Activated CD8-positive, alpha-beta memory T cell treated with anti-CD3 and anti-CD28 coated beads, Interleukin-2, amount 10 ng/mL, durations not matched to agents 7 days and 5 days (primary cell): ENCODE measurements at regions of chr12 and their contacts with region 1.

Region 1: DNA sequence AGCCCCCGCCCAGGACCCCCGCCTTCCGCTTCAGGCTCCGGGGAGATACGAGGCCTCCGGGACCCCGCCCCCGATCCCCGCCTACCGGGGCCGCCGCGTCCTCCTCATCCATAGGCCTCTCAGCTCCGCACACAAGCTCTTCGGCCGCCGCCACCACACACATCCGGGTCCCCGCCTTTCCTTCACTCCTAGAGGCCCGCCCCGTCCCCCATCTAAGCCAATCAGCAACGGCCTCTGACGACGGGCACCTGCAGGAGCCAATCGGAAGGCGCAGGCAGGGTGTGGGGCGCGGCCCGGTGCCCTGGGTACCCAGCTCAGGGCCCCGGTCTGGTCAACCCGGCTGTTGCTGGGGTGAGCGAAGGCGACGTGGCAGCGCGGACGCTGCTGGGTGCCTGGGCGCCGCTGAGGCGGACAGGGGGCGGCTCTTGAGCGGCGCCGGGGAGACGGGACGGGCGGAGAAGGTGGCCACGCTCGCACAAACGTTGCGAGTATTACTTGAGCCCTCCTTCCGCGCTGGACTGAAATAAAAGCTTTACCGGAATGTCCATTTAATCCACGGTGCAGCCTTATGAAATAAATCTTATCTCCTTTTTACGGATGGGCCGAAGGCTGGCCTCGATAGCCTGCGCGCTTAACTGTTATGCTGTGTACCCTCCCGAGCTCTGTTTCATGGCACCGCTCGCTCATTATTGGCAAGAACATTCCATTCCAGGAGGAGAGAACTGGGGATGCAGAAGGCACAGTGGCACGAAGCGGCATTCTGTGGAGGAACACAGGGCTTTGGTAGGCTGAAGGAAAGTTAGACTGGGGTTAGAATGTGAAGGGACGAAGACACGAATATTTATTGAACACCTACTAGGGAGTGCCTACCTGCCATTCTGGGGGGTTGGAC is at the start of gene SPRYD3:
- DNase-seq: peak; percentile 97
- ATAC-seq: peak; percentile 97
- H3K4me3 Mint-ChIP-seq: peak within 1 kb of the TSS; percentile 80
- H3K27ac Mint-ChIP-seq: peak within 1 kb of the TSS; percentile 88
- H3K4me1 Mint-ChIP-seq: peaks cover 31% of the 10 kb centered on the region
- H3K27me3 Mint-ChIP-seq: no peaks in the 10 kb centered on the region
- total RNA-seq, gene SPRYD3: 27.8 to 29.7 TPM

Region 2: GRCh38 chr12:52837413-52837741 is 242.1 kb before region 1 on chr12:
- CTCF ChIA-PET with region 1: no interaction called
- DNase-seq: no peak
- ATAC-seq: no peak
- H3K4me3 Mint-ChIP-seq: no peak overlapping the region
- H3K27ac Mint-ChIP-seq: no peak overlapping the region
- H3K4me1 Mint-ChIP-seq: peaks cover 30% of the 10 kb centered on the region
- H3K27me3 Mint-ChIP-seq: peaks cover 5% of the 10 kb centered on the region

Region 3: DNA sequence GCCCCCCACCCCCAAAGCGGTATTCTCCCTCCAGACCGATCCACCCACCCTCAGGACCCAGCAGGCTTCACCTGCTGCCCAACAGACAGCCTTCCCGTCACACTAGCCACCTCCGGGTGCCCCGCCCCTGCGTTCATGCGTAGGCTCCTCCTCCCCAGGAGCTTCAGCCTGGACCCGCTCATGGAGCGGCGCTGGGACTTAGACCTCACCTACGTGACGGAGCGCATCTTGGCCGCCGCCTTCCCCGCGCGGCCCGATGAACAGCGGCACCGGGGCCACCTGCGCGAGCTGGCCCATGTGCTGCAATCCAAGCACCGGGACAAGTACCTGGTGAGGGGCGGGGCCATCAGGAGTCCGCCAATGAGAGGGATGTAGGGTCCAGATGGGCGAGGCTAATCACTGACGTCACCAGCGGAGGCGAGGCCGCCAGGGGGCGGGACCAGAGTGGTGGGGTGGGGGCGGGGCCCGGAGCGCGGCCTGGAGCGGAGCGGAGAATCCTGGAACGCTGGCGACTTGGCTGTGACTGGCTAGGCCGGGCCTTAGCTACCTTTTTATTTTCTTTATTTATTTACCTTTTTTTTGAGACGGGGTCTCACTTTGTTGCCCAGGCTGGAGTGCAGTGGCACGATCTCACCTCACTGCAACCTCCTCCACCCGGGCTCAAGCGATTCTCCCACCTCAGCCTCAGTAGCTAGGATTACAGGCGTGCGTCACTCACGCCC is 25.2 kb before region 1 on chr12:
- CTCF ChIA-PET with region 1: interaction called, 10 read pairs
- DNase-seq: peak; percentile 95
- ATAC-seq: peak; percentile 94
- H3K4me3 Mint-ChIP-seq: peak overlapping the region; percentile 92
- H3K27ac Mint-ChIP-seq: peak overlapping the region; percentile 86
- H3K4me1 Mint-ChIP-seq: peaks cover 24% of the 10 kb centered on the region
- H3K27me3 Mint-ChIP-seq: no peaks in the 10 kb centered on the region